ENCODE measurements at regions of chr15 and their contacts with region 1.

Region 1: GRCh38 chr15:65184868-65185738 is at the start of gene CLPX:
- DNase-seq: peak; percentile 96
- H3K4me3 ChIP-seq: peak within 1 kb of the TSS; percentile 73 to 94 (median 86)
- H3K27ac ChIP-seq: peak within 1 kb of the TSS; percentile 96 to 98 (median 98)
- H3K4me1 ChIP-seq: peaks cover 29 to 43% (median 41%) of the 10 kb centered on the region in 4 donors
- H3K27me3 ChIP-seq: no peaks in the 10 kb centered on the region
- CTCF ChIP-seq: no peak
- EP300 ChIP-seq: no peak
- POLR2A ChIP-seq: peak; percentile 55
- total RNA-seq, gene CLPX: 37.4 to 53.2 (median 39.8) TPM

Region 2: GRCh38 chr15:64961013-64961412 is 224.1 kb before region 1 on chr15:
- intact Hi-C with region 1: no loop called
- DNase-seq: no peak
- H3K4me3 ChIP-seq: no peak overlapping the region
- H3K27ac ChIP-seq: no peak overlapping the region
- H3K4me1 ChIP-seq: no peaks in the 10 kb centered on the region
- H3K27me3 ChIP-seq: no peaks in the 10 kb centered on the region
- CTCF ChIP-seq: no peak
- EP300 ChIP-seq: no peak
- POLR2A ChIP-seq: no peak

Region 3: GRCh38 chr15:65223996-65224395 is 38.9 kb after region 1 on chr15:
- intact Hi-C with region 1: no loop called
- DNase-seq: no peak
- H3K4me3 ChIP-seq: no peak overlapping the region
- H3K27ac ChIP-seq: no peak overlapping the region
- H3K4me1 ChIP-seq: no peaks in the 10 kb centered on the region
- H3K27me3 ChIP-seq: no peaks in the 10 kb centered on the region
- CTCF ChIP-seq: no peak
- EP300 ChIP-seq: no peak
- POLR2A ChIP-seq: no peak

Region 4: DNA sequence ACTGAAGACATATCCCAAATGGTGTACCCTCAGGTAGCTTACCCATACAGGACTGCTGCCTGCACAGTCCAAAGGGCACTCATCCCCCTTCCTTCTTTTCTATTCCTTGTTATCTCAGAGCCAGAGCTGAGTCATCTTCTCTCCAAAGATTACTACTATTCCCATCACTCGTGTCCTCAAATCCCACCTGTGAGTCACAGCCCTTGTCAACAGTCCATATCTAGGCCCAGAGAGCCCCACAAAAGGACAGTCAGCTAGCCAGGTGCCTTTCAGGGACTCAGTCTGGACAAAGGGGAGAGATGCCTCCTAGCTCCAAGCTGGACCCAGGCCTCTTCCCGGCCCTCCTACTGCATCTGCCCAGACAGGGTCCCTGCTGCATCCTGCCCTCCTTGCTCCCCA is 90.6 kb after region 1 on chr15:
- intact Hi-C with region 1: loop called (anchors 1 kb)
- DNase-seq: no peak
- H3K4me3 ChIP-seq: no peak overlapping the region
- H3K27ac ChIP-seq: no peak overlapping the region
- H3K4me1 ChIP-seq: peaks cover 2 to 20% (median 8%) of the 10 kb centered on the region in 4 donors
- H3K27me3 ChIP-seq: no peaks in the 10 kb centered on the region
- CTCF ChIP-seq: no peak
- EP300 ChIP-seq: no peak
- POLR2A ChIP-seq: no peak

Region 5: GRCh38 chr15:65298731-65299130 is 113.6 kb after region 1 on chr15:
- intact Hi-C with region 1: loop called (anchors 5 kb)
- DNase-seq: no peak
- H3K4me3 ChIP-seq: no peak overlapping the region
- H3K27ac ChIP-seq: no peak overlapping the region
- H3K4me1 ChIP-seq: peaks cover 14 to 36% (median 29%) of the 10 kb centered on the region in 4 donors
- H3K27me3 ChIP-seq: no peaks in the 10 kb centered on the region
- CTCF ChIP-seq: no peak
- EP300 ChIP-seq: no peak
- POLR2A ChIP-seq: no peak